ENCODE measurements at regions of chr9 and their contacts with region 1.

Region 1: DNA sequence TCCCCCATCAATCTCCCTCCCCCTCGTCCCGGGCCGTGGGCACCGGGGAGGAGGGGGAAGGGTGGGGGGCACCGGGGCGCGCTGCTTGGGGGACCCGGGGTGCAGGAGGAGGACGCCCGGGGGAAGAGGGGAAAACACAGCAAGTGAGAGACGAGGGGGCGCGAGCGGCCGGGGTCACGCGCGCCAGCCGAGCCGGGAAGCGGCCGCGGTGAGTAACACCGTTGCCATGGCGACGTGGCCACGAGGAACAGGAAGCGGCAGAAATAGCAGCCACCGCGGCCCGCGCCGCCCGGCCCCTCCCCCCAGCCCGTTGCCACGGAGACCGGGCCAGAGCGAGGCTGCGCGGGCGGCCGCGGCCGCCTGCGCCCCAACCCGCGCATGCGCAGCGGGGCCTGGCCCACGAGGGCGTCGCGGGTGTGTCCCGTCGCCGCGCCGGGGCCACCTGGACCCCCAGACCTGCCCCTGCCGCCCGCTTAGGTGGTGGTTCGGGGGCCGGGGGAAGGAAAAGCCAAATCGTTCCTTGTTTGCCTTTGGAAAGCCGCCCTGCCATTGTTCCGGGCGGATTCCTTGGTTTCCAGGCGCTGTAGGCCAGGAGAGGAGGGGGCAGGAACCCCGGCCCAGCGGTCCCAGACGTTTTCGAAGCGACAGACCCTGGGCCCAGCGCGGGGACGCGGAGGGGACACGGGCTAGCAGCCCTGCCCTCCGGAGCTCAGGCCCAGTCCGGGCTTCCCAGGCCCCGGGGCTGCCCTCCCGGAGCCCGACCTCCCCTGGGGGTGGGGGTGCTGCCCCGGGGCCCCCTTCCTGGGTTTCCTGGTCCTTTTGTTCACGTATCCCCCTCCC is 207.1 kb downstream of the C9orf50 start:
- DNase-seq: peak; percentile 98 to 99
- H3K4me3 ChIP-seq: peak overlapping the region; percentile 52
- H3K4me3 Mint-ChIP-seq: peak overlapping the region; percentile 73
- H3K27ac Mint-ChIP-seq: peak overlapping the region; percentile 95
- H3K4me1 ChIP-seq: peaks cover 46% of the 10 kb centered on the region
- H3K4me1 Mint-ChIP-seq: peaks cover 13% of the 10 kb centered on the region
- H3K27me3 ChIP-seq: no peaks in the 10 kb centered on the region
- H3K27me3 Mint-ChIP-seq: no peaks in the 10 kb centered on the region
- CTCF ChIP-seq: no peak

Region 2: GRCh38 chr9:129333953-129334724 is 79.6 kb before region 1 on chr9:
- CTCF ChIA-PET with region 1: no interaction called
- POLR2A ChIA-PET with region 1: interaction called, 6 read pairs
- intact Hi-C with region 1: loop called (anchors 2 kb)
- DNase-seq: peak; percentile 97 to 99
- H3K4me3 ChIP-seq: peak overlapping the region; percentile 11
- H3K4me3 Mint-ChIP-seq: peak overlapping the region; percentile 68
- H3K27ac Mint-ChIP-seq: peak overlapping the region; percentile 98
- H3K4me1 ChIP-seq: peaks cover 27% of the 10 kb centered on the region
- H3K4me1 Mint-ChIP-seq: peaks cover 19% of the 10 kb centered on the region
- H3K27me3 ChIP-seq: no peaks in the 10 kb centered on the region
- H3K27me3 Mint-ChIP-seq: no peaks in the 10 kb centered on the region
- CTCF ChIP-seq: peak; percentile 22 to 31

Region 3: GRCh38 chr9:129436751-129437625 is 23.2 kb after region 1 on chr9:
- CTCF ChIA-PET with region 1: interaction called, 3 read pairs
- POLR2A ChIA-PET with region 1: no interaction called
- intact Hi-C with region 1: loop called (anchors 2 kb)
- DNase-seq: peak in 1 of 2 experiments; percentile 57
- H3K4me3 ChIP-seq: peak overlapping the region; percentile 42
- H3K4me3 Mint-ChIP-seq: peak overlapping the region; percentile 72
- H3K27ac Mint-ChIP-seq: peak overlapping the region; percentile 7
- H3K4me1 ChIP-seq: peaks cover 7% of the 10 kb centered on the region; the same call in 1 of the 2 replicates
- H3K4me1 Mint-ChIP-seq: peaks cover 11% of the 10 kb centered on the region
- H3K27me3 ChIP-seq: no peaks in the 10 kb centered on the region
- H3K27me3 Mint-ChIP-seq: no peaks in the 10 kb centered on the region
- CTCF ChIP-seq: no peak

Measured in Caco-2 (cell line).